Activated naive CD4-positive, alpha-beta T cell treated with anti-CD3 and anti-CD28 coated beads for 36 hours (primary cell): ENCODE measurements at regions of chr9 and their contacts with region 1.

Region 1: GRCh38 chr9:110152704-110153374 is 55.1 kb downstream of the C9orf152 start:
- DNase-seq: no peak
- H3K4me3 Mint-ChIP-seq: no peak overlapping the region
- H3K27ac Mint-ChIP-seq: no peak overlapping the region
- H3K4me1 Mint-ChIP-seq: peaks cover 57% of the 10 kb centered on the region
- H3K27me3 Mint-ChIP-seq: no peaks in the 10 kb centered on the region

Region 2: GRCh38 chr9:109411798-109412352 is 741.0 kb before region 1 on chr9:
- CTCF ChIA-PET with region 1: no interaction called
- intact Hi-C with region 1: loop called (anchors 10 kb)
- DNase-seq: peak; percentile 72
- H3K4me3 Mint-ChIP-seq: no peak overlapping the region
- H3K27ac Mint-ChIP-seq: peak overlapping the region; percentile 69
- H3K4me1 Mint-ChIP-seq: peaks cover 31% of the 10 kb centered on the region
- H3K27me3 Mint-ChIP-seq: peaks cover 22% of the 10 kb centered on the region

Region 3: DNA sequence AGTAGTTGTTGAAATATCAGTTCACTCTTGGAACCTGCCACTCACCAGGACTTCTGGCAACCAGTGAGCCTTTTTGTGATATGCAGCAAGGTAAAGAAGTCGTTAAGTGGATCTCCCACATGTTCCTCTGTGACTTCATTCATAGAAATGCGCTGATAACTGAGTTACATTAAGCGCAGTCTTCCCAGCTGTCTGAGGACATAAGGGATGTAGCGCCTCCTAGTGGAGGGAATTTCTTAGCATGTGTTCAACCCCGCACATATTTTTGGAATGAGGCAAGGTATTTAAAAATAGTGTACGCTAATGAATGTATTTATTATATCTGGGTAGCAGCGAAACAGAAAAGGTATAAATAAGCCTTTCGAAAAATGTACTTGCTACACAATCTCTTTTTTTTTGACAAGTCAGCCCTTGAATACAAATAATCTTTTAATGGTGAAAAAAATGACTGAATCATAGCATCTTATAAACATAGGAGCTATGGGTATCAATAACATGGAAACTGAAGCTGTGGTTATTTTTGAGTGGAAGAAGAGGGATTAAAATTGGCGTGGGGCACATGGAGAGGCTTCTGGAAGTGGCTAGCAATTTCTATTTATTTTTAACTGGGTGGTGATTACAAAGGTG is 334.9 kb before region 1 on chr9:
- CTCF ChIA-PET with region 1: no interaction called
- intact Hi-C with region 1: loop called (anchors 5 kb)
- DNase-seq: peak; percentile 72
- H3K4me3 Mint-ChIP-seq: no peak overlapping the region
- H3K27ac Mint-ChIP-seq: no peak overlapping the region
- H3K4me1 Mint-ChIP-seq: no peaks in the 10 kb centered on the region
- H3K27me3 Mint-ChIP-seq: peaks cover 13% of the 10 kb centered on the region

Region 4: GRCh38 chr9:109894921-109895758 is 257.7 kb before region 1 on chr9:
- CTCF ChIA-PET with region 1: interaction called, 9 read pairs
- intact Hi-C with region 1: loop called (anchors 1 kb)
- DNase-seq: peak; percentile 89
- H3K4me3 Mint-ChIP-seq: peak overlapping the region; percentile 45
- H3K27ac Mint-ChIP-seq: peak overlapping the region; percentile 92
- H3K4me1 Mint-ChIP-seq: peaks cover 36% of the 10 kb centered on the region
- H3K27me3 Mint-ChIP-seq: no peaks in the 10 kb centered on the region

Region 5: DNA sequence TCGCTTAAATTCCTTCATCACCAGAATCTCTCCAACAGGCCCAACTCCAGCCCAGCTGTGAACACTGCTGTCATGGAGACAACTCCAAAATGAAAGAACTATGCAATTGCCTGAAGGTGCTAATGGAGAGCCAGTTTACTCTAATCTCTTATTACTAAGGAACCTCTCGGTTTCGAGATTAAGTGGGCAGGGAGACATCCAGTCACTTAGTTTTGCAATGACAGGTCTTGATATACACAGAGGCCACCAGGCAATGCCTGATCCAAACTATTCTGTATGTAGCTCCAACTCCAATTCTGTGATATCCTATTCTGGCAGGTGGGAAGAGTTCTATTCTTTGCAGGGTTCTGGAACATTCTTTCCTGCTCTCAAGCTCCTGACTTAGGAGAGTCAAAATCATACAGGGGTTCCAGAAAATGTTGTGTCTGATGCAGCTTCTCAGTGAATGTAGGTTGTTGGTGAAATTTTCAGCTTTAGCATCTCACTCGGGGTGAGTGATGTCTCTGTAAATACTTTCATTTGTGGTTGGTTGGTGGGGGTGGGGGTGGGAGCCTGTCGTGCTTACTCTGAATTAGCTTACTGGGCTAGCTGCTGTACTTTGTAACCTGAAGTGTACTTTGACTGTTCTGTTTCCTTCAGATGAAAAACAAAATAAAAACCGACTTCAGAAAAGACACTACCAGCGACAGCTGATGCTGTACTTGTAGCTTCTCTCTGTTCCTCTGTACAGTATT is 202.0 kb before region 1 on chr9:
- CTCF ChIA-PET with region 1: no interaction called
- intact Hi-C with region 1: loop called (anchors 1 kb)
- DNase-seq: peak; percentile 58
- H3K4me3 Mint-ChIP-seq: no peak overlapping the region
- H3K27ac Mint-ChIP-seq: peak overlapping the region; percentile 67
- H3K4me1 Mint-ChIP-seq: peaks cover 23% of the 10 kb centered on the region
- H3K27me3 Mint-ChIP-seq: no peaks in the 10 kb centered on the region

Region 6: DNA sequence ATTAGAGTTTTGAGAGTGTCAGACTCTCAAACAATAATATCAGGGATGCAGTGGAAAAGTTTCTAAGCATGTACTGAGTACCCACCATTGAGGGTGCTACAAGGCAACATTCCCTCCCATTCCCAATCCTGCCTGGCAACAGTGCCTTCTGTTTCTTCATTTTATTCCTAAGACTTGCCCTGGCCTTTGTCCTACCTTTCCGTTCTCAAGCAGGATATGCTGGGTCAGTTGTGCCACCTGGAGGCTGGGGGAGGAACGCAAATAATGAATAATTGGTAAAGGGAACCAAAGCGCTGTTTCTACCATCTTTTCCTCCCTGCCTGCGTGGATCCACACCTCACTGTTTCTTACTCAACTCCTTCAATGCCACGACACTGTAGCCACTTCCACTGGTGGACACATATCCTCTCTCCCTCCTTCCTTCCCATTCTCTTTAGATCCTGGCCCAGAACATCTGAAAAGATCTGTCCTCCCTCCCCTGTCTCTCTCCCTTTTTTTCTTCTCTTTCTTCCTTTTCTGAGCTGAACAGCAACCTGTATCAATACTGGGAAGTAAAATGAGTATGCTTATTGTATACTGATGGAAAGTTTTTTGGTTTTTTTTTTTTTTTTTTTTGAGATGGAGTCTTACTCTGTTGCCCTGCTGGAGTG is 94.4 kb before region 1 on chr9:
- CTCF ChIA-PET with region 1: interaction called, 13 read pairs
- intact Hi-C with region 1: no loop called
- DNase-seq: peak; percentile 74
- H3K4me3 Mint-ChIP-seq: no peak overlapping the region
- H3K27ac Mint-ChIP-seq: no peak overlapping the region
- H3K4me1 Mint-ChIP-seq: peaks cover 9% of the 10 kb centered on the region
- H3K27me3 Mint-ChIP-seq: peaks cover 2% of the 10 kb centered on the region

Region 7: GRCh38 chr9:110334183-110334582 is 181.3 kb after region 1 on chr9:
- CTCF ChIA-PET with region 1: no interaction called
- intact Hi-C with region 1: no loop called
- DNase-seq: no peak
- H3K4me3 Mint-ChIP-seq: no peak overlapping the region
- H3K27ac Mint-ChIP-seq: no peak overlapping the region
- H3K4me1 Mint-ChIP-seq: no peaks in the 10 kb centered on the region
- H3K27me3 Mint-ChIP-seq: no peaks in the 10 kb centered on the region